ENCODE measurements at regions of chr11 and their contacts with region 1.

Region 1: DNA sequence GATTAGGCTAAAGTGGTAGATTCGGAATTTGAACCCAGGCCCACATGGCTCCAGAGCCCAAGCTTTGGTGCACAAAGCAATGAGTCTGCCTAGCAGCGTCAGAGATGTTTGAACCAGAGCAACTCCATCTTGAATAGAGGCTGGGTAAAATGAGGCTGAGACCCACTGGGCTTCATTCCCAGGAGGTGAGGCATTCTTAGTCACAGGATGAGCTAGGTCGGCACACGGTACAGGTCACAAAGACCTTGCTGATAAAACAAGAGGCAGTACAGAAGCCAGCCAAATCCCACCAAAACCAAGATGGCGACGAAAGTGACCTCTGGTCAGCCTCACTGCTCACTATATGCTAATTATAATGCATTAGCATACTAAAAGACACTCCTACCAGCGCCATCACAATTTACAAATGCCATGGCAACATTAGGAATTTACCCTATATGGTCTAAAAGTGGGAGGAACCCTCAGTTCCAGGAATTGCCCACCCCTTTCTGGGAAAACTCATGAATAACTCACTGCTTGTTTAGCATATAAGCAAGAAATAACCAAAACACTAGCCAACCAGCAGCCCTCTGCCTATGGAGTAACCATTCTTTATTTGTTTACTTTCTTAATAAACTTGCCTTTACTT is 40.3 kb upstream of the DAGLA start:
- DNase-seq: no peak
- H3K4me3 Mint-ChIP-seq: no peak overlapping the region
- H3K27ac Mint-ChIP-seq: no peak overlapping the region
- H3K4me1 Mint-ChIP-seq: no peaks in the 10 kb centered on the region
- H3K27me3 Mint-ChIP-seq: peaks cover 22% of the 10 kb centered on the region

Region 2: DNA sequence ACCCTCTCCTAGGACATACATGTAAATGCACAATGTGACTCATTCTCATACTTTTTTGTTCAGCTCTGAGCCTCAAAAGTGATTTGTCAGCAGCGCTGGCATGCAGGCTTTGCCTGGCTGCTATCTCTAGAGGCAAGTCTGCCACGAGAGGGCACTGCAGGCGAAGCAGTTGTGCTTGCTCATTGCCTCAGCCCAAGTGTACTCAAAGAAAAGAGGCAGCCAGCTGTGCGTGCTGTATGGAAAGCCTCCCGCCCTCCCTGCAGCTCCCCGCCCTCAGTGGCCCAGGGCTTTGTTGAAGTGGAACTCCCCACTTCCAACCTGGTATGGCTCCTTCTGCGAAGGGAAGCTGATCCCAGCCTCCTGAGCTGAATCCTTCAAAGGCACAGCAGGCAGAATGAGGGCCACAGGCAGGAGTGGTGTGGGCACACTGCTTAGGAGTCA is 193.7 kb before region 1 on chr11:
- CTCF ChIA-PET with region 1: interaction called, 21 read pairs
- DNase-seq: peak; percentile 88
- H3K4me3 Mint-ChIP-seq: no peak overlapping the region
- H3K27ac Mint-ChIP-seq: no peak overlapping the region
- H3K4me1 Mint-ChIP-seq: peaks cover 4% of the 10 kb centered on the region
- H3K27me3 Mint-ChIP-seq: no peaks in the 10 kb centered on the region

Region 3: DNA sequence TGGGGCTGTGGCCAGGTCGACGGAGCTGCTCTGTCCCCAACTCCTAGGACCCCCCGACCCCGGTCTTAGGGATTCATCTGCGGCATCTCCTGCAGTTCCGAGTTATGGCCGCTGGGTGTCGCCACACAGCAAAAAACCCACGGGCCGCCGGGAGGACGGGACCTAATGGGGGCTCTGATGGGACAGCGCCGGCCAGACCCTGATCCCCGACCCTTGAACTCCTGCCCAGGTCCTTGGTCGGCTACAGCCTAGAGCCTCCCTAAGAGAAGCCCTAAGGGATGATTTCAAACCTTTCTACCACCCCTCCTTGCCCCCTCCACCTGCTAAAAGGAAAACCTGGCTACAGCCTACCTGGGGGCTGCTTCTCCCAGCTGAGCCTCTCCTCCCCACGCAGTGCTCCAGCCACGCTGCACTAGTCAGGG is 162.2 kb before region 1 on chr11:
- CTCF ChIA-PET with region 1: interaction called, 10 read pairs
- DNase-seq: peak; percentile 68
- H3K4me3 Mint-ChIP-seq: no peak overlapping the region
- H3K27ac Mint-ChIP-seq: no peak overlapping the region
- H3K4me1 Mint-ChIP-seq: peaks cover 7% of the 10 kb centered on the region
- H3K27me3 Mint-ChIP-seq: peaks cover 3% of the 10 kb centered on the region

Region 4: DNA sequence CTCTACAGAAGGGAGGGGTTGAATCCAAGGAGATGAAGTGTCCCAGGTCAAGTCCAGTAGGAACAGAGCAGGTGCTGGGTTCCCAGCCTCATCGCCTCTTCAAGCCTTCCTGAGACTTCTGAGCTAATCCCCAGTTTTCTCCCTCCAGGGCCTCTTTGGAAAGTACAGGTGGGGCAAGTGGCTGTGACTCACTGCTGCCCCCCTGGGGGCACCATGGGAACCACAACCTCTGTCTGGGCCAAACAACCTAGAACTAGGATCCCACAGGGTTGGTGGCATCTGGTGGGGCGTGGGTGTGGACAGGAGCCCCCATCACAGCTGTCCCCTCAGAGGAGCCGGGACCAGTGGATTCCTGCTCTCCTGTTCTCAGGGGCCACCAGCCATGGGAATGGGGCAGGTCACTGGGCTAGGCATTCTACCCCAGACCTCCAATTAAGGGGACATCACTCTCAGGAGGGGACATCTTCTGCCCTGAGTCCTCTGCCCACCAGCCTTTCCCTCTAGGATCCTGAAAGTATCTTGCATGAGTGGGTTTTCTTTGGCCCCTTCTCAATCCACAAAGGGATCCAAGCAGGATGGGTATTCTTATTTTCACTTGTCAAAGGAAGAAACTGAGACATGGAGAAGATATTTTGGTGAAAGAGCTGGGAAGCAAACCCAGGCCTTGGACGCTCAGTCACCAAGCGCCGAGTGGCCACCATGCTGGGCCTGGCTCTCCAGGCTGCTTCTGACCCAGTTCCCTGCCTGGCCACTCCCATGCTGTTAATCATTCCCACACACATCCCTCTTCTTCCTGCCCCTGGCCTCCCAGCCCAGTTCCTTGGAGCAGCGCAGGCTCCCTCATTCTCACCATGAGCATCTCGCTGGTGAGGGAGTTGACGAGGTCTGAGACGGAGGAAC is 107.5 kb before region 1 on chr11:
- CTCF ChIA-PET with region 1: interaction called, 13 read pairs
- DNase-seq: peak; percentile 58
- H3K4me3 Mint-ChIP-seq: no peak overlapping the region
- H3K27ac Mint-ChIP-seq: no peak overlapping the region
- H3K4me1 Mint-ChIP-seq: no peaks in the 10 kb centered on the region
- H3K27me3 Mint-ChIP-seq: peaks cover 31% of the 10 kb centered on the region

Region 5: GRCh38 chr11:61627567-61628445 is 12.1 kb before region 1 on chr11:
- CTCF ChIA-PET with region 1: interaction called, 26 read pairs
- DNase-seq: peak; percentile 56
- H3K4me3 Mint-ChIP-seq: no peak overlapping the region
- H3K27ac Mint-ChIP-seq: no peak overlapping the region
- H3K4me1 Mint-ChIP-seq: peaks cover 6% of the 10 kb centered on the region
- H3K27me3 Mint-ChIP-seq: peaks cover 20% of the 10 kb centered on the region

Region 6: DNA sequence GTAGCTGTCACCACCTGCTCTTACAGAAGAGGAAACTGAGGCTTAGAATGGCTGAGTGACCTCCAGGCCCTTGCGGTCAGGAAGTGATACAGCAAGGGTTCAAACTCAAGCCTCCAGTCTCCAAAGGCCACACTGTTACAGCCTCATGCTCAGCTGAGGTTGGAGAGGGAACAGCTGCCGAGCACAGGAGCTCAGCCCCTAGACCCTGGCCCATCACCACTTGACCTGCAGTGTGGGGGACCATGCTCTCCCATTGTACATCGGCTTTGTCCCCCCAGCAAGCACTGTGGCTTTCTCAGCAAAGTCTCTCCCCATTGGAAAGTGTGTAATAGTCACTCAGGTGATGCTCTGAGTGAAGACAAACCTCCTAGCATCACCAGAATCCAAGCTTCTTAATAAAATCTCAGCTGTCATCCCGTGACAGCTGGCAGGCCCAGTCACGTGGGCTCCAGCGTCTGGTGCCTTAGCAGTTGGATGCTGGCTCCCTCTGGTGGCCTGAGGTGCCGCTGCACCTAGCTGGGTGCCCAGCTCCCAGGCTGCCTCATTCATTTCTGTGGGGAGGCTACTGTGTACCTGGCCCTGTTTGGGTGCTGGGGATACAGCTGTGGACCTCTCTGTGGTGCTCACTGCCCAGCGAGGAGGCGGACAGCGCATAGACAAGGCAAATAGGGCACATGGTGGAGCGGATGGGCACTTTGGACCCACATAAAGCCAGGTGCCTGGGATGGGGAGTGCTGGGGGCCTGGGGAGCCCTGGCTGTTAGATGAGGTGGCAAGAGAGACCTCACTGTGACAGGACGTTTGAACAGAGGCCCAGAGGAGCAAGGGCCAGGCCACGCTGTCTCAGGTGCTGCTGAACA is 93.4 kb after region 1 on chr11:
- CTCF ChIA-PET with region 1: interaction called, 13 read pairs
- DNase-seq: peak; percentile 91
- H3K4me3 Mint-ChIP-seq: no peak overlapping the region
- H3K27ac Mint-ChIP-seq: no peak overlapping the region
- H3K4me1 Mint-ChIP-seq: no peaks in the 10 kb centered on the region
- H3K27me3 Mint-ChIP-seq: peaks cover 10% of the 10 kb centered on the region

Region 7: GRCh38 chr11:61827571-61828378 is 187.8 kb after region 1 on chr11 and contains the start of gene FADS2:
- CTCF ChIA-PET with region 1: no interaction called
- DNase-seq: peak; percentile 96
- H3K4me3 Mint-ChIP-seq: peak within 1 kb of the TSS; percentile 89
- H3K27ac Mint-ChIP-seq: peak within 1 kb of the TSS; percentile 93
- H3K4me1 Mint-ChIP-seq: peaks cover 51% of the 10 kb centered on the region
- H3K27me3 Mint-ChIP-seq: peaks cover 46% of the 10 kb centered on the region